ENCODE measurements at regions of chr4 and their contacts with region 1.

Region 1: DNA sequence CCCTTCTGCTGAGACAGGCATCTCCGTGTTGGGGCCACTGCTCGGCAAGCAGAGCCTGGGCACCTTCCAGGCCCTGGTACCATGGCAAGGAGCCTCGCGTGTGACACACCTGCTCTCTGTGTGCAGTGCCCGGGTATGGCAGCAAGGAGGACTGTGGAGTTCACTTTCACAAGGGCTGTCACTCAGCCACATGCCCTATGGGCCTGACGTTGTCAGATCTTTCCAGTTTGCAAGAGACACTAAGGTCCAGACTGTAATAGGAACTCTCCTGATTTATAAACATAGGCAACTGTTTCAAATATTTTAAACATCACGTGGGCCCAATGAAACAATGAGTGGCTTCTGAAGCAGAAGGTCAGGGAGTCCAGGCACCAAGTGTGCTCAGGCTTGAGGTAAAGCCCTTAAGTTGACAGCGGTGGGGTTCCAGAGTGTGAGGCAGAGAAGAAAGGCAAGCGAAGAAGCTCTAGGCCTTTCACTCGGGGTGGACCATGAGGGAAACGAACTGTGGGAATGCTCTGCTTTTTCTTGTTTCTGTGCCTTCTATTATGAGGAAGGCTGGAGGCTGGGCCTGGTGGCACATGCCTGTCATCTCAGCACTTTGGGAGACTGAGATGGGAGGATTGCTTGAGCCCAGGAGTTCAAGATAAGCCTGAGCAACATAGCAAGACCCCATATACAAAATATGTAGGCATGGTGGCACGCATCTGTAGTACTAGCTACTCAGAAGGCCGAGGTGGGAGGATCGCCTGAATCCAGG is 108.6 kb upstream of the TRIM2 start:
- DNase-seq: no peak
- H3K4me3 ChIP-seq: no peak overlapping the region
- H3K4me3 Mint-ChIP-seq: no peak overlapping the region
- H3K27ac ChIP-seq: no peak overlapping the region
- H3K27ac Mint-ChIP-seq: peak overlapping the region in 1 of 8 donors; percentile 56
- H3K4me1 ChIP-seq: peaks cover 5% of the 10 kb centered on the region
- H3K4me1 Mint-ChIP-seq: peaks cover 3 to 11% (median 4%) of the 10 kb centered on the region in 3 donors
- H3K27me3 ChIP-seq: no peaks in the 10 kb centered on the region
- H3K27me3 Mint-ChIP-seq: peaks cover 0 to 2% of the 10 kb centered on the region in 2 donors

Region 2: GRCh38 chr4:152843481-152844090 is 252.0 kb before region 1 on chr4:
- CTCF ChIA-PET with region 1: no interaction called
- POLR2A ChIA-PET with region 1: interaction called, 11 read pairs
- DNase-seq: no peak
- H3K4me3 ChIP-seq: no peak overlapping the region
- H3K4me3 Mint-ChIP-seq: no peak overlapping the region
- H3K27ac ChIP-seq: no peak overlapping the region
- H3K27ac Mint-ChIP-seq: peak overlapping the region in 1 of 8 donors; percentile 48
- H3K4me1 ChIP-seq: no peaks in the 10 kb centered on the region
- H3K4me1 Mint-ChIP-seq: peaks cover 20 to 25% (median 23%) of the 10 kb centered on the region in 3 donors
- H3K27me3 ChIP-seq: no peaks in the 10 kb centered on the region
- H3K27me3 Mint-ChIP-seq: no peaks in the 10 kb centered on the region